H1 (cell line): ENCODE measurements at regions of chr3 and their contacts with region 1.

Region 1: GRCh38 chr3:65914740-65915367 is 123.9 kb downstream of the MAGI1 start:
- DNase-seq: no peak
- H3K4me3 ChIP-seq: no peak overlapping the region
- H3K27ac ChIP-seq: no peak overlapping the region
- H3K4me1 ChIP-seq: peaks cover 0 to 4% (median 0%) of the 10 kb centered on the region in 4 experiments; a peak in 1 of 7 replicates
- H3K27me3 ChIP-seq: no peaks in the 10 kb centered on the region
- CTCF ChIP-seq: peak in 2 of 3 experiments; percentile 1 to 18; a peak in 2 of 4 replicates
- EP300 ChIP-seq: no peak
- POLR2A ChIP-seq: no peak
- RAD21 ChIP-seq: peak; percentile 34 to 47

Region 2: GRCh38 chr3:65785065-65785645 is 129.7 kb before region 1 on chr3:
- CTCF ChIA-PET with region 1: interaction called, 12 read pairs
- POLR2A ChIA-PET with region 1: no interaction called
- DNase-seq: no peak
- H3K4me3 ChIP-seq: no peak overlapping the region
- H3K27ac ChIP-seq: no peak overlapping the region
- H3K4me1 ChIP-seq: peaks cover 0 to 2% (median 0%) of the 10 kb centered on the region in 4 experiments; a peak in 1 of 7 replicates
- H3K27me3 ChIP-seq: no peaks in the 10 kb centered on the region
- CTCF ChIP-seq: peak in 2 of 3 experiments; percentile 31 to 57; a peak in 2 of 4 replicates
- EP300 ChIP-seq: no peak
- POLR2A ChIP-seq: no peak
- RAD21 ChIP-seq: peak; percentile 82 to 88

Region 3: GRCh38 chr3:65936908-65937638 is 22.2 kb after region 1 on chr3:
- CTCF ChIA-PET with region 1: interaction called, 10 read pairs
- POLR2A ChIA-PET with region 1: no interaction called
- DNase-seq: no peak
- H3K4me3 ChIP-seq: no peak overlapping the region
- H3K27ac ChIP-seq: 0 out of 2 replicates have a peak overlapping the region, but pooled peaks have one; percentile 26
- H3K4me1 ChIP-seq: peaks cover 0 to 2% (median under 1%) of the 10 kb centered on the region in 4 experiments; a peak in 3 of 7 replicates
- H3K27me3 ChIP-seq: no peaks in the 10 kb centered on the region
- CTCF ChIP-seq: no peak
- EP300 ChIP-seq: no peak
- POLR2A ChIP-seq: no peak
- RAD21 ChIP-seq: no peak

Region 4: DNA sequence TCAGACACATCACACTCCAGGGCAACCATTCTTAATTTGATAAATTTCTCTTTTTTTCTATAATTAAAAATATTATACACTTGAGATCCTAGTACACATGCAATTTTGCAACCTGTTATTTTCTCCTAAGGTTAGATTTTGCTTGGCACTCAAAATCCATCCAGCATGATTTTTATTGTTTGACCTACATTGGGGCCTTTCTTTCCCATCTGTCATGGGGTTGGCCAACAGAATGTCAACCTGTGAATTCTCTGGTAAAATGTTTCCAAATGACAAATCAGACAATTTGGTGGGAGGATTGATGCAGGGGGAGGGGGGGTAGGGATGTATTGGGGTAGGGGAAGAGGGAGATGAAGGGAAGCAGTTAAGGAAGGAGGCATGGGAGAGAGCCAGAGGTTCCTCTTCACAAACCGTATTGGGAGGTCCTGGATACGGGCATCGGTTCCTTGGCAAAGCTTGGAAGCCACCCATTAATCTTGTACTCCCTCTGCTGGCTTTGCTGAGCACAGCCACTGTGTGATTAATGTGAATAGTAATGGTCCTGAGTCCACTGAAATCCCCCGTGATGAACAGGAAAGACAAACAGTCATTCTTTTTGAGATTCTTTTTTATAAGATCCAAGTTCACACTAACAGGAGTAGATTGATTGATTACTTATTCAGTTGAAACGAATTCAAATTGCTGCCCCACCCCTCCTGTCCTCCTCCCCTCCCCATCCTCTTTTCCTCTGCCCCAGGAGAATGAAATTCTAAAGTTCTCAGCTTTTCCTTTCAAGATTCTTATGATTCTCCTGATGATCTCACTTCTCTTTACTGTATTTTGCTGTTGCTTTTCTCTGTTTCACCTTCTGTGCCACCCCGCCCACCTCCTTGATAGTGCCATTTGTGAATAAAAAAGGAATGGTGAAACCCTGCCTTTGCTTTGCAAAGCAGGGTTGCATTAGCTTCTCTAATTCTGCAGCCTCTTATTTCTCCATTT is 223.8 kb after region 1 on chr3:
- CTCF ChIA-PET with region 1: interaction called, 10 read pairs
- POLR2A ChIA-PET with region 1: no interaction called
- DNase-seq: peak; percentile 34 to 67
- H3K4me3 ChIP-seq: no peak overlapping the region
- H3K27ac ChIP-seq: no peak overlapping the region
- H3K4me1 ChIP-seq: peaks cover 0 to 4% (median 0%) of the 10 kb centered on the region in 4 experiments; a peak in 2 of 7 replicates
- H3K27me3 ChIP-seq: no peaks in the 10 kb centered on the region
- CTCF ChIP-seq: peak; percentile 56 to 89 (median 85)
- EP300 ChIP-seq: no peak
- POLR2A ChIP-seq: no peak
- RAD21 ChIP-seq: peak; percentile 98